CD4-positive, alpha-beta T cell (primary cell): ENCODE measurements at regions of chr2 and their contacts with region 1.

Region 1: GRCh38 chr2:200219309-200220113 is 87.0 kb upstream of the SPATS2L start:
- DNase-seq: no peak
- ATAC-seq: no peak
- H3K4me3 ChIP-seq: no peak overlapping the region
- H3K4me3 Mint-ChIP-seq: no peak overlapping the region
- H3K27ac ChIP-seq: no peak overlapping the region
- H3K27ac Mint-ChIP-seq: no peak overlapping the region
- H3K4me1 ChIP-seq: no peaks in the 10 kb centered on the region
- H3K4me1 Mint-ChIP-seq: no peaks in the 10 kb centered on the region
- H3K27me3 ChIP-seq: no peaks in the 10 kb centered on the region
- H3K27me3 Mint-ChIP-seq: peaks cover 6% of the 10 kb centered on the region
- CTCF ChIP-seq: no peak

Region 2: DNA sequence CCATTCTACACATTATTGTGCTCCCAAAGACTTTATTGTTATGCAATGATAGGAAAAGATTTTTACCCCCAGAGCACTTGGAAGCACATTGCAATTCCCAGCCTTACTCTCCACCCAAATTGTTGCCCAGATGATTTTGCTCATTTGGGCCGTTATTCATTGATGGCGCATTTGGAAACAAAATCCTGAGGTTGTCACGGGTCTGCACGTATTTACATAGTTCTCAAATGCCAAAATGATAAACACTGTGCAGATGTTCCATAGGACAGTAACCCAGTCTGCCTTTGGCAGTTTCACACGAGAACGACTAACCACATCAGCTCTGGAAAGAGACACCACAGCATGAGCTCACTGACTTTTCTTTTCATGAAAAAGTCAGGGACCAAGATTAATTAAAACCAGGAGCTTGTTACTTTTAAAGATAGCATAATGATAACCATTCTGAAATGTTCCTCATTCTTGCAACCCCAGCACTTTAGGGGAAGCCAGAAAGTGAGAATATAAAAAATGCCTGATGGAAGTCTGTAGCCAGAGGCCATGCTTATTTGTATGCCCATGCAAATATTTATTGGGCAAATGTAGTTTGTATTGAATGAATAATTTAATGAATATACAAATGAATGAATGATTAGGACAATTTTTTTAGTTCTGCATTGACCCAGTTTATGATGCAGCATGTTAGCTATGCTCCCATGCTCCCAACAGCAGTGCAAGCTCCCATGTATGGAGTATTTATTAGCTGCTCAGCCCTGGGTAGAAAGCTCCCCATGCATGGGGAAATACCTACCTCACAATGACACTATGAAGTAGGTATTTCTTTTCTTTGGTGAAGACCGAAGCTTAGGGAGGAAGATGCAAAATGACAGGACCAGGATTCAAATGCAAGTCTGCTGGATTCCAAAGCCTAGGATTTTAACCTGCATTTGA is 179.5 kb before region 1 on chr2:
- CTCF ChIA-PET with region 1: no interaction called
- POLR2A ChIA-PET with region 1: no interaction called
- intact Hi-C with region 1: loop called in 1 of 2 experiments (anchors 10 kb)
- DNase-seq: no peak
- ATAC-seq: no peak
- H3K4me3 ChIP-seq: no peak overlapping the region
- H3K4me3 Mint-ChIP-seq: no peak overlapping the region
- H3K27ac ChIP-seq: no peak overlapping the region
- H3K27ac Mint-ChIP-seq: no peak overlapping the region
- H3K4me1 ChIP-seq: no peaks in the 10 kb centered on the region
- H3K4me1 Mint-ChIP-seq: no peaks in the 10 kb centered on the region
- H3K27me3 ChIP-seq: no peaks in the 10 kb centered on the region
- H3K27me3 Mint-ChIP-seq: peaks cover 17% of the 10 kb centered on the region
- CTCF ChIP-seq: no peak

Region 3: DNA sequence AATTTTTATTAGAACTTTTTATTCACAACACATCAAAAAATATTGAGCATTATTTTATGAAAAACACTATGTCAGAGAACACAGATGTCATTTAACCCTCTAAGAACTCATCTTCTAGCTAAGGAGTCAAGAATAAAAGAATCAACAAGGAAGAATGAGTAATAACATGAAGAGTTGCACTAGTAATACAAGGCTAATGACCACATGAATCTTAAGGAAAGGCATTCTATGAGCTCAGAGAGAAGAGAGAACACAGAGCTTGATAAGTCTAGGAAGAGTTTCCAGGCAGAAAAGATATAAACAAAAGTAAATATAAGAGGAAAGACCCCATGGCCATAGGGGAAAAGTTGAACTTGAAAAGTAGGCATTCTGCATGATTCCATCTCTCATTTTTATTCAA is 97.6 kb before region 1 on chr2:
- CTCF ChIA-PET with region 1: no interaction called
- POLR2A ChIA-PET with region 1: no interaction called
- intact Hi-C with region 1: no loop called
- DNase-seq: no peak
- ATAC-seq: no peak
- H3K4me3 ChIP-seq: no peak overlapping the region
- H3K4me3 Mint-ChIP-seq: no peak overlapping the region
- H3K27ac ChIP-seq: no peak overlapping the region
- H3K27ac Mint-ChIP-seq: no peak overlapping the region
- H3K4me1 ChIP-seq: no peaks in the 10 kb centered on the region
- H3K4me1 Mint-ChIP-seq: no peaks in the 10 kb centered on the region
- H3K27me3 ChIP-seq: peaks cover 0 to 3% of the 10 kb centered on the region in 2 experiments
- H3K27me3 Mint-ChIP-seq: peaks cover 22% of the 10 kb centered on the region
- CTCF ChIP-seq: no peak

Region 4: DNA sequence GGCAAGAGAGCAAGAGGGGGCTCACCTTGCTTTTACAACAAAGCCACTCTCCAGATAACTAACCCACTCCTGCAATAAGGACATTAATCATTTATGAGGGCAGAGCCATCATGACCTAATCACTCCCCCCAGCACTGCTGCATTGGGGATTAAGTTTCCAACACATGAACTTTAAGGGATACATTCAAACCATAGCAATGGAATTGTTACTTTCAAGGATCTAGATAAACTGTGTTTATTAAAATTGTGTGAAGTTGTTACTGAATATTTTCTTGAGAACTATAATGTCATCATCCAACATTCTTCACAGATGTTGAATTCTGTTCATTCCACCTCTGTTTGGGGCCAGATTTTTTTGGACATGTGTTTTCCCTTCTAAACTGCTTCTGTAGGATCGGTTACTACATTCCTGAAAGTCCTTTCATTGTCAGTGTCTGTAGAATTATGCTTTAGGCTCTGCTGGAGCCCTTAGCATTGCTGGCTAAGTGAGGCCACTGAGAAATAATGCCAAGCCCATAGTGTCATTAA is 137.4 kb after region 1 on chr2:
- CTCF ChIA-PET with region 1: no interaction called
- POLR2A ChIA-PET with region 1: no interaction called
- intact Hi-C with region 1: no loop called
- DNase-seq: no peak
- ATAC-seq: no peak
- H3K4me3 ChIP-seq: no peak overlapping the region
- H3K4me3 Mint-ChIP-seq: no peak overlapping the region
- H3K27ac ChIP-seq: no peak overlapping the region
- H3K27ac Mint-ChIP-seq: no peak overlapping the region
- H3K4me1 ChIP-seq: no peaks in the 10 kb centered on the region
- H3K4me1 Mint-ChIP-seq: no peaks in the 10 kb centered on the region
- H3K27me3 ChIP-seq: no peaks in the 10 kb centered on the region
- H3K27me3 Mint-ChIP-seq: no peaks in the 10 kb centered on the region
- CTCF ChIP-seq: no peak